ENCODE measurements at regions of chr12 and their contacts with region 1.

Region 1: GRCh38 chr12:120199595-120200306 is 1.2 kb downstream of the RPLP0 start:
- DNase-seq: no peak
- ATAC-seq: no peak
- H3K4me3 ChIP-seq: peak overlapping the region; percentile 59 to 99
- H3K27ac ChIP-seq: peak overlapping the region; percentile 86
- H3K4me1 ChIP-seq: peaks cover 21 to 59% of the 10 kb centered on the region in 2 experiments; a peak in 3 of 4 replicates
- H3K27me3 ChIP-seq: no peaks in the 10 kb centered on the region
- CTCF ChIP-seq: no peak
- POLR2A ChIP-seq: no peak
- RAD21 ChIP-seq: no peak

Region 2: GRCh38 chr12:119594772-119595445 is 604.8 kb before region 1 on chr12:
- CTCF ChIA-PET with region 1: no interaction called
- POLR2A ChIA-PET with region 1: no interaction called
- RAD21 ChIA-PET with region 1: no interaction called
- intact Hi-C with region 1: no loop called
- DNase-seq: no peak
- ATAC-seq: no peak
- H3K4me3 ChIP-seq: no peak overlapping the region
- H3K27ac ChIP-seq: no peak overlapping the region
- H3K4me1 ChIP-seq: no peaks in the 10 kb centered on the region
- H3K27me3 ChIP-seq: peaks cover 26% of the 10 kb centered on the region; the same call in 1 of the 2 replicates
- CTCF ChIP-seq: no peak
- POLR2A ChIP-seq: no peak
- RAD21 ChIP-seq: no peak

Region 3: DNA sequence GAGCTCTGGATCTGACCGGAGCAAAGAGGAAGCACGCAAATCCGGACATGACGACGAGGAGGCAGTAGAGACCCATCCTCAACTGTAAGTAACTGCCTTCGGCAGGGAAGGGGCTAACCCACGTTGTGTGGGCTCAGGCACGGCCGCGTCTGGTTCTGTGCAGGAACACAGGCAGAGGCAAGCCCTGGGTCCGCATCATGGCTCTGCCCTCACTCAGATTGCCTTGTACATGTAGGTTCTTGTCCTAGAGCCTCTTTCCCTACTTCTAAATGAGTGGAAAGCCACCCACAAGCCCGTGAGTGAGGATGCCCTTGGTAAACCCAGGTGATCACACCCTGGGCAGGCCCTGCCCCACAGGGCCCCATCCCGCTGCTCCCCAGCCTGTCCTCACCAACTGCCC is 10.1 kb after region 1 on chr12:
- CTCF ChIA-PET with region 1: no interaction called
- POLR2A ChIA-PET with region 1: interaction called, 16 read pairs
- RAD21 ChIA-PET with region 1: no interaction called
- intact Hi-C with region 1: no loop called
- DNase-seq: no peak
- ATAC-seq: no peak
- H3K4me3 ChIP-seq: no peak overlapping the region
- H3K27ac ChIP-seq: no peak overlapping the region
- H3K4me1 ChIP-seq: no peaks in the 10 kb centered on the region
- H3K27me3 ChIP-seq: no peaks in the 10 kb centered on the region
- CTCF ChIP-seq: no peak
- POLR2A ChIP-seq: no peak
- RAD21 ChIP-seq: no peak

Region 4: DNA sequence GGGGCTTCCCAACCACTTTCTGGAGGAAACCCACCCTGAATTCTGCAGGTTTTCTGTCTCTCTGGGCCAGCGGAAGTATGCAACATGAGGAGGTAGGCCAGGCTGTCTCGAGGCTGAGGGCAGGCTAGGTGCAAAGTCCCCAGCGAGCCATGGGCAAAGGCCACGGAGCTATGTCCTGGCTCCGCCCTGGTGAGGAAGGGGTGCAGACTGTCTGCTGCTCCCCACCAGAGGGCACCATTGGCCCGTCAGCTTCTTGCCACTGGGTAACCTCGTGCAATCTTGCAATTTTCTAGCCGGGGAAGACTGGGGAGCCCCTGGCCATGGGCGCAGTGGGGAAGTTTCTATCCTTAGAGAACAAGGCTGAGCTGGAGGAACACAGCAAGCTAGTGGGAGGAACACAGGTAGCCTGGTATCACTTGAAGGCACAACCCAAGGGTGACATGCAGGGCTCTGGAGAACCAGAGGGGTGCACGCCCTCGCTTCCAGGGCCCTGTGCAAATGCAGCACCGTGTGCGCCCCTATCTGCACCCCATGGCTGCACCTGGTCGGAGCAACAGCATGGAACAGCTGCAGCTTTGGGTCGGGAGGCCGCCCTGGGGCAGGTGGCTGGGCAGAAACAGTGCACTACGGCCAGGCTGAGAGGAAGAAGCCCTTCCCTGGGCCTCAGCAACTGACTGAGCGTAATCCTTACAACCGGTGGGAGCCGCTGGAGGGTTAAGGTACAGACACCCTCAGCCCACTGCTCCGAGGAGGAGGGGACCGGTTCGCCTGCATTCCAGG is 28.7 kb after region 1 on chr12:
- CTCF ChIA-PET with region 1: interaction called, 31 read pairs
- POLR2A ChIA-PET with region 1: interaction called, 117 read pairs
- RAD21 ChIA-PET with region 1: interaction called, 3 to 4 read pairs
- intact Hi-C with region 1: no loop called
- DNase-seq: no peak
- ATAC-seq: peak; percentile 52
- H3K4me3 ChIP-seq: peak overlapping the region; percentile 19 to 58
- H3K27ac ChIP-seq: peak overlapping the region; percentile 100
- H3K4me1 ChIP-seq: peaks cover 55 to 85% of the 10 kb centered on the region in 2 experiments
- H3K27me3 ChIP-seq: no peaks in the 10 kb centered on the region
- CTCF ChIP-seq: peak in 2 of 3 experiments; percentile 89; a peak in 4 of 6 replicates
- POLR2A ChIP-seq: no peak
- RAD21 ChIP-seq: no peak

Region 5: DNA sequence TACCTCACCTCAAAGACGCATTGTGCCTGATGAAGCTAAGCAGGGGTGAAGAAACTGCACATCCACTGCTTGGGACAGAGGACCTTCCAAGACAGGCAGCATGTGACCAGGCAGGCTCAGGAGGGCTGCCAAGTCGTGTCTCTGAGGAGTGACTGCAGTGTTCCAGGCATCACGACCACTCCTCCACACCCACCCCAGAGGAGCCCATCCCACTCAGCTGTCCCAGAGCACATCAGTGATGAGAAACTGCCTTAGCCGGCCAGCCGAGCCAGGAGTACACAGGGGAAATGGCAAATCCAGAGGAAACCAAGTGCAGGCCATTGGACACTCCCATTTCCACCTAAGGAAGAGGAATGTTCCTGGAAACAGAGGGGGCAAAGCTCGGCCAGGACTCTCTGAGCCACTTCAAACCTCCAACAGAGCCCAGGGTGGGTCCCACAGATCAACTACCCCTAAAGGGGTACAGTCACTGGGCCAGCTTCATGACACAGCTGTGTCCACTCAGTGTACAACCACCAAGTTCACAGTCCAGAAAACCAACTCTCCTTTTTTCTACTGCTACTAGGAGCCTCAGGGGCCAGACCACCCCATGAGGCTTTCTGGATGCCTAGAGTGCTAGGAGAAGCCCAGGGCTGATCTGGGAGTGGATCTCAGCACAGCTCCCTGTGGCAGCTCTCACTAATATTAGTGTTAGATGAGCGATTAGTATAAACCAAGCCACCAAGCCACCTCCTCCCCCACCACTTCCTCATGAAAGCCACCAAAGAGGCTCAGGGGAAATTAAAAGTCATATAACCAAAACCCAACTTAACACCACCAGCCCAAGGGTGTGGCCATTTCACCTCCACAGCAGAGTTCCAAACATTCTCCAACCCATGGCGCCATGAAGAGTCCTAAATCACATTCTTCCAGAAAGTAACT is 50.4 kb after region 1 on chr12:
- CTCF ChIA-PET with region 1: interaction called, 4 read pairs
- POLR2A ChIA-PET with region 1: interaction called, 27 read pairs
- RAD21 ChIA-PET with region 1: no interaction called
- intact Hi-C with region 1: no loop called
- DNase-seq: no peak
- ATAC-seq: no peak
- H3K4me3 ChIP-seq: no peak overlapping the region
- H3K27ac ChIP-seq: peak overlapping the region; percentile 72
- H3K4me1 ChIP-seq: peaks cover 53 to 84% of the 10 kb centered on the region in 2 experiments
- H3K27me3 ChIP-seq: no peaks in the 10 kb centered on the region
- CTCF ChIP-seq: no peak
- POLR2A ChIP-seq: no peak
- RAD21 ChIP-seq: no peak

Region 6: DNA sequence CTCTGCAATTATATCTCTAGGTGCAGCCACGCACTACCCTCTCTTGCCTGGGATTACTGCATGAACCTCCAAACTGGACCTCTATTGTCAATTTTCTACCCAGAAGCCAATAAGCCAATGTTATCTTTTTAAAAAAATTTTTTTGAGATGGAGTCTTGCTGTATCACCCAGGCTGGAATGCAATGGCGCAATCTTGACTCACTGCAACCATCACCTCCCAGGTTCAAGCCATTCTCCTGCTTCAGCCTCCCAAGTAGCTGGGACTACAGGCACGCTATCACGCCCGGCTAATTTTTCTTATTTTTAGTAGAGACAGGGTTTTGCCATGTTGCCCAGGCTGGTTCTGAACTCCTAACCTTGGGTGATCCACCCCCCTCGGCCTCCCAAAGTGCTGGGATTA is 77.0 kb after region 1 on chr12:
- CTCF ChIA-PET with region 1: no interaction called
- POLR2A ChIA-PET with region 1: interaction called, 13 read pairs
- RAD21 ChIA-PET with region 1: no interaction called
- intact Hi-C with region 1: no loop called
- DNase-seq: no peak
- ATAC-seq: no peak
- H3K4me3 ChIP-seq: no peak overlapping the region
- H3K27ac ChIP-seq: no peak overlapping the region
- H3K4me1 ChIP-seq: no peaks in the 10 kb centered on the region
- H3K27me3 ChIP-seq: no peaks in the 10 kb centered on the region
- CTCF ChIP-seq: no peak
- POLR2A ChIP-seq: no peak
- RAD21 ChIP-seq: no peak

Region 7: GRCh38 chr12:120292661-120293531 is 93.1 kb after region 1 on chr12 and contains the start of gene RNU4-1:
- CTCF ChIA-PET with region 1: interaction called, 12 read pairs
- POLR2A ChIA-PET with region 1: interaction called, 223 read pairs
- RAD21 ChIA-PET with region 1: no interaction called
- intact Hi-C with region 1: no loop called
- DNase-seq: peak; percentile 99
- ATAC-seq: peak; percentile 60
- H3K4me3 ChIP-seq: peak within 1 kb of the TSS; percentile 47 to 56
- H3K27ac ChIP-seq: peak within 1 kb of the TSS; percentile 84
- H3K4me1 ChIP-seq: peaks cover 10 to 36% of the 10 kb centered on the region in 2 experiments
- H3K27me3 ChIP-seq: no peaks in the 10 kb centered on the region
- CTCF ChIP-seq: 0 out of 6 replicates have a peak, but pooled peaks of 1 of the 3 experiments have one; percentile 6
- POLR2A ChIP-seq: peak; percentile 100
- RAD21 ChIP-seq: 0 out of 2 replicates have a peak, but pooled peaks have one; percentile 24
- total RNA-seq, gene RNU4-1: 2,323 TPM